ENCODE measurements at regions of chr1 and their contacts with region 1.

Region 1: GRCh38 chr1:205591522-205592351 is 40.1 kb downstream of the ELK4 start:
- DNase-seq: peak; percentile 82 to 98 (median 90)

Region 2: DNA sequence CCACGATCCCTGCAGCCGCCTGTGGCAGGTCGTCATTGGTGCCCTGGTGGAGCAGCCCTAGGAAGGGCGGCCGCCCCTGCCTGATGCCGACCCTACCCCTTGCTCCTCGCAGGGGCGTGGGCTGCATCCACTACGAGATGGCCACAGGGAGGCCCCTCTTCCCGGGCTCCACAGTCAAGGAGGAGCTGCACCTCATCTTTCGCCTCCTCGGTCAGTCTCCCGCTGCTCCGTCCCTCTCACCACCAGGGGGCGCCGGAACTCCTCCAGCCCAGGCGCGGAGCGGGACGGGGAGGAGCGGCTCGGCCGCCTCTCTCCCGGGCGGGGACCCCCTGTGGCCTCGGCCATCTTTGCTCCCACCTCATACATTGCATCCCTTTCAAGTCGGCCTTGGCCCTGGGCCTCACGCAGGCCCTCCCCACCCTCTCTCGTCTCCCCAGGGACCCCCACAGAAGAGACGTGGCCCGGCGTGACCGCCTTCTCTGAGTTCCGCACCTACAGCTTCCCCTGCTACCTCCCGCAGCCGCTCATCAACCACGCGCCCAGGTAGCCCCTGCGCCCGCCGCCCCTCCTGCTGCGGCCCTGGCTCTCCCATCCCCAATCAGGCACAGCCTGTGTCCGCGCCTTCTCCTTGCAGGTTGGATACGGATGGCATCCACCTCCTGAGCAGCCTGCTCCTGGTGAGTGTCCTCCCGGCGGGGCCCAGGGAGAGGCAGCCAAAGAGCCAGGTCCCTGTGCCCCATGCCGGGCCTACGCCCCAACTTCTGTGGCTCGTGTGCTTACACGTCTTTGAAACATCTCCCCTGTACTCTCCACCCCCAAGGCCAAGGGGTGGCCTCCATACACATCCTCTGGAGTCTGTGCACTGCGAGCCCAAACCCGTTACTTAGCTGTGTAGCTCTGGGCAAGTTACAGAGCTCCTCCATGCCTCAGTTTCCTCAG is 62.6 kb before region 1 on chr1:
- intact Hi-C with region 1: loop called (anchors 5 kb)
- DNase-seq: peak; percentile 77 to 97 (median 90)

Region 3: DNA sequence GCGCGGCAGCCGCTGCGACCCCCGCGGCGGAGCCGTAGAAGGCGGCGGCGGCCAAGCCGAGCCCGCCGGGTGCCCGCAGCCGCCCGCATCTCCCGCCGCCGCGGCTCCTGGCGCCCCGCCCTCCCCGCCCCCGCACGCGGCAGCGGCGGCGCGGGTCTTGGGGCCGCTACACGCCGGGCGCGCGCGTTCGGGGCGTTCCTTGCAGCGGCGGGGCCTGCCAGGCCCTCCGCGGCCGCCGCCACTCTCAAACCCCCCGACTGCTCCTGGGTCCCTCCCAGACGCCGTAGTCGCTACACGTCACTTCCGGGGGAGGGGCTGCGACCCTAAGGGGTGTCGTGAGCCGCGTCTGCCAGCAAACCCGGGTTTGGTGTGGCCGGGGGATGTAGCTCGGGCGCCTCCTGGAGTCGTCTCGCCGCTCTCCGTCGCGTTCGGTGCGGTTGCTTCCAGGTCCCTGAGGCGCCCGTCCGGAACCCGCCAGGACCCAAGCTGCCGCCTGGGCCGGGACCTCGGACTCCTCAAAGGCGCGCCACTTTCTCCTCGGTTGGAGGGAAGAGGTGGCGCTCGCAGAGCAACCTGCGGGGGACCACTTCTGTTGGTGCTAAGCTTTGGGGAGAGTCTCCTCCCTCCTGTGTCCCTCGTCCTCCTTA is 40.1 kb after region 1 on chr1 and contains the start of gene ELK4:
- intact Hi-C with region 1: loop called (anchors 1 kb)
- DNase-seq: peak; percentile 97 to 100 (median 99)

Region 4: DNA sequence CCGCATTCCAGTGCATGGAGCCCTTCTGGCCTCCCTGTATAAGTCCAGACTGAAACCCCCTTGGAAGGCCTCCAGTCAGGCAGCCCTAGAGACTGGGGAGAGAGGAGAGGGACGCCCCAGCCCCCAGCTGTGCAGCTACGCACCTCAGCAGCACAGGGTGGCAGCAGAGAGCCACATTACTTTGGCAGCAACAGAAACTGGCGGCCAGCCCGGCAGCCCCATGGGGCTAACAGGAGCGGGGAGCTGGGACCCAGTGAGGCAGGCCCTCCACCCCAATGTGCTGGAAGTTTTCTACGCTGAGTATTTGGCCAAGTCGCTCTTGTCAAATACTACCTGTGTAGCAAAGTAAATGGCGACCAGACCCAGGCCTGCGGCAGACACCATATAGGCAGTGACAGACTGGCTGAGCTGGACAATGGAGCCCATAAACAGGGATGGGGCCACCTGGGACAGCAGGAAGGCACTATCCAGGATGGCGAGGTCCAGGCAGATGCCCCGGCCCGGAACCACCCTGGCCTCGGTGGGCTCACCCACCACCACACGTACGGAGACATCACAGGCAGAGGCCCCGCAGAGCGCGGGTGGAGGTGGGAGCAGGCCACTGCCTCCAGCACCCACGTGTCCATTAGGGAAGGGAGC is 67.3 kb after region 1 on chr1:
- intact Hi-C with region 1: loop called (anchors 1 kb)
- DNase-seq: peak; percentile 79 to 98 (median 90)

Region 5: DNA sequence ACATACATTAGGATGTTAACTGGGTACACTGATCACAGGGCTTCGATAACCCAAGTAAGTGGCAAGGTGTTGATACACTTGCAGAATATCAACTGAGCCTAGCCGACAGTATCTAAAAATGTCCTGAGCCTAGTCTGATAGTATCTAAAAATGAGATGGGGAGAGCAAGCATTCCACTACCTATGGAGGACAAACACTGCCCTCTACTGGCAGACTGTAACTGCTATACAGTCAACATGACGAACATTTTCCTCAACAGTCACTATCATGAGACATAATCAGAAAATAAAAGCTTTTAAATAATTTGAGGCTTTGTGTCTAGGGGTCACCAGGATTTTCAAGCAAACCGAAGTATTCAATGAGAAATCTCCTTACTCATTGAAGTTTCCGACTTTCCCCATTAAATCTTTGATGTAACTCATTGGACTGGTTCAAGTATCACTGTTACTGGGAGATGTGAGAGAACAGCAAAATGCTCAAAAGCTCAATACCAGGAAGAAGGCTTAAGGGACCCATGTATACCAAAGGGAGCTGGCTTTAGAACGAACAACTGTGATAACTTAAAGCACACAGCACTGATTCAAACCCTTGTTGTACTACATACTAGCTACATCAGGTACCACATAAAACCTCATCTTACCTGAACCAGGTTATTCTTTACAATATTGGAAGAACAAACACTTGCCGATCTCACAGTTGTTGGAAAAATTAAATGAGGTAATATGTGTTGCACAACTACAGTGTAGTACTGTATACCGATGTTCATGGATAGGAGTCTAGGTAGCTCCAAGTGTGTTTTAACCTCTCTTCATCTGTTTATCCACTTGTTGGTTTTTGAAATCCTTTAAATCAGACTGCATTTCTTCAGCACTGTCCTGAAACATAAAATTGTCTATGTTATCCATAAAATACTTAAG is 119.6 kb after region 1 on chr1:
- intact Hi-C with region 1: loop called (anchors 2 kb)
- DNase-seq: peak in 5 of 10 donors; percentile 19 to 74 (median 44)

Measured in posterior cingulate gyrus (tissue), 11 donors.